HEK293 (cell line): ENCODE measurements at regions of chr5 and their contacts with region 1.

Region 1: GRCh38 chr5:171342362-171343111 is 33.5 kb downstream of the TLX3 start:
- H3K4me3 ChIP-seq: no peak overlapping the region
- H3K27ac ChIP-seq: no peak overlapping the region
- H3K4me1 ChIP-seq: no peaks in the 10 kb centered on the region
- CTCF ChIP-seq: no peak; the same call in 1 of the 2 replicates

Region 2: GRCh38 chr5:170809551-170809950 is 533.0 kb before region 1 on chr5:
- CTCF ChIA-PET with region 1: interaction called, 12 read pairs
- POLR2A ChIA-PET with region 1: no interaction called
- H3K4me3 ChIP-seq: no peak overlapping the region
- H3K27ac ChIP-seq: no peak overlapping the region
- H3K4me1 ChIP-seq: no peaks in the 10 kb centered on the region
- CTCF ChIP-seq: peak; percentile 61

Region 3: DNA sequence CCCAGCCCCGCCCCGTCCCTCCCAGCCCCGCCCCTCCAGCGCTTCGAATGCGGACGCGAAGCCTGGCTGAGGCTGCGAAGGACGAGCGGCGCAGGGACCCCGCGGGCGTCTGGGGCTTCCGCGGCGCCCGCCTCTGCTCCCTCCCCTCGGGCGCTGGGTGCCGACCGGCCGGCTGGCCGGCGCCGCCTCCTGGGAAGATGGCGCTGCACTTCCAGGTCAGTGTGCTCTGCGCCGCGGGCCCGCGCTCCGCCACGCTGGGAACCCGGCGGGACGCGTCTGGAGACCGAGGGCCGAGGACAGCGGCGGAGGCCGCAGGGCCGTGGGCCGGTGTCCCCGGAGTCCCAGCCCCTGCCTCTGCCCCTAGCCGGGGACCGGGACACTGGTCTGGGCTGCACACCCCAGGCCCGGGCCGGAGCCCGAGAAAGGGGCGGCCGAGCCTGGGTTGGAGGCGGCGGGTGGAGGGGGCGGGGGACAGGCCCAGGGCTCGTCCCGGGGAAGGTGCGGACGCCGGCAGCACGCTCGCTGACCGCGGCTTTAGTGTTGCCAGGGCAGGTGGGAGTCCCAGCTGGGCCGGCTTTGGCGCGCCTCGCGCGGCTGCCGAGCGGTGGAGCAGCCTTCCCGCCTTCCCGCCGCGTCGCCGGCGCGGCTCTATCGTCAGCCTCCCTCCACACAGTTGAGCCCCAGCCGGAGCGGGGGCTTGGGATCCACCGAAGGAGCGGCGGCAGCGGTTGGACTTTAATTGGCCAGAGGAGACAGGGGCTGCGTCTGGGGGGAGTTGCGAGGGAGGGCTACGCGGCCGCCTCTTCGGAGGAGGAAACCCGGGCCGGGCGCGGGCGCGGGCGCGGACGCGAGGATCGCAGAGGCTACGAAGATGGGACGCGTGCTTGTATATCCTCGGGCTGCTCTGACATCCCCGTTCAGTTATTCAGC is 480.4 kb before region 1 on chr5 and contains the start of gene RANBP17:
- CTCF ChIA-PET with region 1: no interaction called
- POLR2A ChIA-PET with region 1: no interaction called
- H3K4me3 ChIP-seq: peak within 1 kb of the TSS; percentile 85
- H3K27ac ChIP-seq: peak within 1 kb of the TSS; percentile 75; the same call in 1 of the 2 replicates
- H3K4me1 ChIP-seq: no peaks in the 10 kb centered on the region; the same call in 1 of the 2 replicates
- CTCF ChIP-seq: 0 out of 2 replicates have a peak, but pooled peaks have one; percentile 28

Region 4: GRCh38 chr5:171207256-171207847 is 135.2 kb before region 1 on chr5:
- CTCF ChIA-PET with region 1: interaction called, 101 read pairs
- POLR2A ChIA-PET with region 1: no interaction called
- H3K4me3 ChIP-seq: no peak overlapping the region
- H3K27ac ChIP-seq: no peak overlapping the region
- H3K4me1 ChIP-seq: no peaks in the 10 kb centered on the region
- CTCF ChIP-seq: no peak

Region 5: DNA sequence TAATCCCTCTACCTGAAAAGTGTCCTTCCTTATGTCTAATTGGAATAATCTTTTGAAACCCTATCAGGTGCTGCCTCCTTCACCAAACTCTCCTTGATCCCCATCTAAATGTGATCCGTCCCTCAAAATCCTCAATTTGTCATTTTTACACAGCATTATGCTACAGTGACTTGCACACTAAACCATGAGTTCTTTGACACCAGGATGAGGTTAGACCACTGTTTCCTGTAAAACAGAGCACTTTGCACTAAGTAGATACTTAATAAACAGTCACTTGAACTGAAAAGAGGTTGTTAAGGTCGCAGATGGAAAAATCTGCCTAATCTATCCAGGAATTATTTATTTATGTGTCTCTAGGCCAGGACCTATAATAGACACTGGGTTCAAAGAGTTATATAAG is 77.7 kb before region 1 on chr5:
- CTCF ChIA-PET with region 1: interaction called, 15 read pairs
- POLR2A ChIA-PET with region 1: no interaction called
- H3K4me3 ChIP-seq: no peak overlapping the region
- H3K27ac ChIP-seq: no peak overlapping the region
- H3K4me1 ChIP-seq: peaks cover 3% of the 10 kb centered on the region
- CTCF ChIP-seq: no peak

Region 6: GRCh38 chr5:171272996-171273970 is 69.3 kb before region 1 on chr5:
- CTCF ChIA-PET with region 1: interaction called, 49 read pairs
- POLR2A ChIA-PET with region 1: no interaction called
- H3K4me3 ChIP-seq: no peak overlapping the region
- H3K27ac ChIP-seq: no peak overlapping the region
- H3K4me1 ChIP-seq: peaks cover 14% of the 10 kb centered on the region
- CTCF ChIP-seq: peak; percentile 42; the same call in 1 of the 2 replicates

Region 7: DNA sequence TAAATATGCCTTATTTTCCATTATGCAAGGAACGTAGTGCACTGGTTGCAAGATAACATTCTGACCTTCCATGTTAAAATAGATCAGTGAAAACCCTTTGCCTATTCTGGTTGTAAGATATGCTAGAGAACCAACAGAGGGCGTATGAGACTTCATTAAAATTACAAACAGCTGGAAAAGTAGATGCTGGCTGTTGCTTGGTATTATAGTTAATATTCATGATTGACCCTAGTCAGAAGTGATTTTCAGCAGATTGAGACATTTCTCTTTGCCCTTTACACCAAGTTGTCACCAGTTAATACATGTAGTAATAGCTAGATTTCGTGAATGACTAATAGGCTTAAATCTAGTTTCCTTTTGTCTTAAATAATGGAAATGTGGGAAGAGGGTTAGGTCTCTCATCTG is 63.1 kb after region 1 on chr5:
- CTCF ChIA-PET with region 1: no interaction called
- POLR2A ChIA-PET with region 1: no interaction called
- H3K4me3 ChIP-seq: no peak overlapping the region
- H3K27ac ChIP-seq: no peak overlapping the region
- H3K4me1 ChIP-seq: no peaks in the 10 kb centered on the region
- CTCF ChIP-seq: no peak

Region 8: GRCh38 chr5:171724468-171725204 is 382.1 kb after region 1 on chr5:
- CTCF ChIA-PET with region 1: no interaction called
- POLR2A ChIA-PET with region 1: no interaction called
- H3K4me3 ChIP-seq: no peak overlapping the region
- H3K27ac ChIP-seq: no peak overlapping the region
- H3K4me1 ChIP-seq: no peaks in the 10 kb centered on the region
- CTCF ChIP-seq: no peak